Sciatic nerve (tissue), 2 donors: ENCODE measurements at regions of chr2 and their contacts with region 1.

Region 1: DNA sequence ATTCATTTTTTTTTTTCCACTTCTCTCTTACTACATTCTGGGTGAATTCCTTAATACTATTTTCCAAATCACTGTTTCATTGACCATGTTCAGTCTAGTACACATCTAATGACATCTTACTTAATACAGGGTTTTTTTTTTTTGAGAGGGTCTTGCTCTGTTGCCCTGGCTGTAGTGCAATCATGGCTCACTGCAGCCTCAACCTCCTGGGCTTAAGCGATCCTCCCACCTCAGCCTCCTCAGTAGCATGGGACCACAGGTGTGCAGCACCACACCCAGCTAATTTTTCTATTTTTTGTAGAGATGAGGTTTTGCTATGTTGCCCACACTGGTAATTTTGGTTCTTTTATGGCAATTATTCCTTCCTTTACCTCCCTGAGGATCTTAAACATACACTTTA is 29.4 kb downstream of the FBXO11 start:
- DNase-seq: no peak
- ATAC-seq: no peak

Region 2: GRCh38 chr2:47735136-47735869 is 141.6 kb before region 1 on chr2:
- intact Hi-C with region 1: no loop called
- DNase-seq: no peak
- ATAC-seq: no peak

Region 3: DNA sequence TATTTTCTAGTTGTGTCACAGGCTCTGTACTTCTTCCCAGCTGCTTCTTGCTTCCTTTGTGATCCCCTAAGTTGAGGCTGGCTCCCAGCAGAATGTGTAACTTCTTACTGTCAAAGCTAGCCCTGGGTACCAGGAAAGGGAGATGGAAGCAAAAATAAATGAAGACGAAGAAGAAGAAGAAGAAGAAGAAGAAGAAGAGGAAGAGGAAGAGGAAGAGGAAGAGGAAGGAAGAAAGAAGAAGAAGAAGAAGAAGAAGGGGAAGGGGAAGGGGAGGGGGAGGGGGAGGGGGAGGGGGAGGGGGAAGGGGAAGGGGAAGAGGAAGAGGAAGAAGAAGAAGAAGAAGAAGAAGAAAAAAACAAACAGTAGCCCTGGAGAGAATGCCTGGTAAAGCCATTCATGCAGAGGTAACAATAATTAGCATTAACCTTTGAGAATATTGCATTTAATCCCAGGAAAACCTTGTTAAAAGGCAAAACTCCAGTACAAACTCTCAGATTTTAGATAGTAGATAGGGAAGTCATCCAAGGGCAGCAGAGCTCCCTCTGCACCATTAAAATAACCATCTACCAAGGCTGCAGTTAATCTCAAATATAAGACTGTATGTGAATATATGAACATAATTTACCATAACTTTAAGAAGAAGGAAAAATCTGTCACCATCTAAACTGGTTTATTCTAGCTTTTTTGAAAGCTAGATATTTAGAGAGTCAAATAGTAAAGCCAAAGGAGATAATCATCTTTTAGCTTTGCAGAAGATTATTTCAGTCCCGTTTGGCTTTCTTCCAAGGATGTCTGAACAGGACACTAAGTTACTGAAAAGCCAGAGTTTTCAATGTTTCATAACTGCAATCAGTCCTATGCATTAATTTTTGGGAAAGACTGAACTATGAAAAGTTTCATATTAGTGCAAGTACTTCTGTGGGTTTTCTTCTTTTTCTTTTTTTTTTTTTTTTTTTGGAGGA is 73.7 kb after region 1 on chr2:
- intact Hi-C with region 1: loop called (anchors 2 kb)
- DNase-seq: no peak
- ATAC-seq: no peak

Region 4: GRCh38 chr2:48292393-48292792 is 415.5 kb after region 1 on chr2:
- intact Hi-C with region 1: no loop called
- DNase-seq: no peak
- ATAC-seq: no peak